Common myeloid progenitor, CD34-positive (primary cell): ENCODE measurements at regions of chr14 and their contacts with region 1.

Region 1: GRCh38 chr14:31084385-31084784 is 58.2 kb upstream of the STRN3 start:
- DNase-seq: no peak
- H3K4me3 ChIP-seq: no peak overlapping the region
- H3K27ac ChIP-seq: no peak overlapping the region
- H3K4me1 ChIP-seq: no peaks in the 10 kb centered on the region
- H3K27me3 ChIP-seq: no peaks in the 10 kb centered on the region

Region 2: DNA sequence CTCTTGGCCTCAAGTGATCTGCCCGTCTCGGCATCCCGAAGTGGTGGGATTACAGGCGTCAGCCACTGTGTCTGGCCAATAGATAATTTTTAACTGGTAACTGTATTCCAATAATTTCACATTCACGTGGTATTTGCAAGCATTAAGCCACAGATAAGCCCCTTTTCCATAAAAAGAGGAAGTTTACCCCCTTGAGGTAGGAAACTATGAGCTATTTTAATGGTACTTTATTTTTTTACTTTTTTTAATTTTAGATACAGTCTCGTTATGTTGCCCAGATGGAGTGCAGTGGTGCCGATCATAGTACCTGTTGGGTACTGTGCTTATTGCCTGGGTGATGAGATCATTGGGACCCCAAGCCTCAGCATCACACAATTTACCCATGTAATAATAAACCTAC is 101.9 kb before region 1 on chr14:
- CTCF ChIA-PET with region 1: interaction called, 28 read pairs
- POLR2A ChIA-PET with region 1: no interaction called
- DNase-seq: peak; percentile 49 to 82 (median 72)
- H3K4me3 ChIP-seq: peak overlapping the region in 1 of 7 experiments; percentile 52
- H3K27ac ChIP-seq: peak overlapping the region in 1 of 2 experiments; percentile 26
- H3K4me1 ChIP-seq: peaks cover 0 to 11% (median 8%) of the 10 kb centered on the region in 4 experiments
- H3K27me3 ChIP-seq: no peaks in the 10 kb centered on the region